Activated CD4-positive, alpha-beta memory T cell treated with anti-CD3 and anti-CD28 coated beads for 36 hours (primary cell): ENCODE measurements at regions of chr2 and their contacts with region 1.

Region 1: GRCh38 chr2:135985018-135985825 is at the start of gene DARS1:
- DNase-seq: peak; percentile 92
- H3K4me3 Mint-ChIP-seq: peak within 1 kb of the TSS; percentile 90
- H3K27ac Mint-ChIP-seq: peak within 1 kb of the TSS; percentile 97
- H3K4me1 Mint-ChIP-seq: peaks cover 48% of the 10 kb centered on the region
- H3K27me3 Mint-ChIP-seq: no peaks in the 10 kb centered on the region
- total RNA-seq, gene DARS1: 215 to 218 TPM

Region 2: DNA sequence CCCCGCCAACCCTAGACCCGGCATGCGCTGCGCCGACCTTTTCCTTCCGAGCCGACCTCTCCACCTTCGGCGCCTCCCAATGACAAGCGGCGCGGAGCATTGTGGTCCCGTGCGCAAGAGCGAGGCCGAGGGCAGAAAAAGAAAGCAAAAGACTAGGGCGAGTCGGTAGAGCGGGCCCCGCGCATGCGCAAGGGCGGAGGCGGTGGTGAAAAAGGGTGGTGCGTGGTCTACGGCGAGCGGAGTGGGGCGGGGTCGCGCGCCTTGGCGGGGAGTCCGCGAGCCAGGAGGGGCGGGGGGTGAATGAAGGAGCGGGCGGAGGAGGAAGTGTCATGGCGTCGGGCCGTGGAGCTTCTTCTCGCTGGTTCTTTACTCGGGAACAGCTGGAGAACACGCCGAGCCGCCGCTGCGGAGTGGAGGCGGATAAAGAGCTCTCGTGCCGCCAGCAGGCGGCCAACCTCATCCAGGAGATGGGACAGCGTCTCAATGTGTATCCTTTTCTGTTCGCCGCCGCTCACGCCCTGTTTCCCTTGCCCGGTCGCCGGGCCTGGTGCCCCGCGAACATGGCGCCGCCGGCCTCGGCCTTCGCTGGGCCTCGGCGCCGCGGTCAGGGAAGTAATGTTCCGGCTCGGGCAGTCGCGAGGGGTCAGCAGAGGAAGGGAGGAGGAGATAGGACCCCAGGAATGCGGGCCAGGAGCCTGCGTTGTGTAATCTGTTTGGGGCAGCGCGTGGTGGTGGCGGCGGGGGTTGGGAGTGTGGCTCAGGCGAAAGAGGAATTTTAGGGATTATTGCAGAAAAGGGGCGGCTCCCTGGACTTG is 1066.5 kb before region 1 on chr2 and contains the start of gene CCNT2:
- CTCF ChIA-PET with region 1: no interaction called
- POLR2A ChIA-PET with region 1: no interaction called
- intact Hi-C with region 1: loop called (anchors 10 kb)
- DNase-seq: peak; percentile 100
- H3K4me3 Mint-ChIP-seq: peak within 1 kb of the TSS; percentile 90
- H3K27ac Mint-ChIP-seq: peak within 1 kb of the TSS; percentile 97
- H3K4me1 Mint-ChIP-seq: peaks cover 35% of the 10 kb centered on the region
- H3K27me3 Mint-ChIP-seq: peaks cover 5% of the 10 kb centered on the region
- total RNA-seq, gene CCNT2: 25.1 to 25.7 TPM

Region 3: GRCh38 chr2:135876066-135876711 is 109.0 kb before region 1 on chr2 and contains the start of gene MCM6:
- CTCF ChIA-PET with region 1: no interaction called
- POLR2A ChIA-PET with region 1: interaction called, 9 read pairs
- intact Hi-C with region 1: loop called (anchors 1 kb)
- DNase-seq: peak; percentile 100
- H3K4me3 Mint-ChIP-seq: peak within 1 kb of the TSS; percentile 90
- H3K27ac Mint-ChIP-seq: peak within 1 kb of the TSS; percentile 98
- H3K4me1 Mint-ChIP-seq: peaks cover 39% of the 10 kb centered on the region
- H3K27me3 Mint-ChIP-seq: peaks cover 2% of the 10 kb centered on the region
- total RNA-seq, gene MCM6: 280 to 284 TPM

Region 4: DNA sequence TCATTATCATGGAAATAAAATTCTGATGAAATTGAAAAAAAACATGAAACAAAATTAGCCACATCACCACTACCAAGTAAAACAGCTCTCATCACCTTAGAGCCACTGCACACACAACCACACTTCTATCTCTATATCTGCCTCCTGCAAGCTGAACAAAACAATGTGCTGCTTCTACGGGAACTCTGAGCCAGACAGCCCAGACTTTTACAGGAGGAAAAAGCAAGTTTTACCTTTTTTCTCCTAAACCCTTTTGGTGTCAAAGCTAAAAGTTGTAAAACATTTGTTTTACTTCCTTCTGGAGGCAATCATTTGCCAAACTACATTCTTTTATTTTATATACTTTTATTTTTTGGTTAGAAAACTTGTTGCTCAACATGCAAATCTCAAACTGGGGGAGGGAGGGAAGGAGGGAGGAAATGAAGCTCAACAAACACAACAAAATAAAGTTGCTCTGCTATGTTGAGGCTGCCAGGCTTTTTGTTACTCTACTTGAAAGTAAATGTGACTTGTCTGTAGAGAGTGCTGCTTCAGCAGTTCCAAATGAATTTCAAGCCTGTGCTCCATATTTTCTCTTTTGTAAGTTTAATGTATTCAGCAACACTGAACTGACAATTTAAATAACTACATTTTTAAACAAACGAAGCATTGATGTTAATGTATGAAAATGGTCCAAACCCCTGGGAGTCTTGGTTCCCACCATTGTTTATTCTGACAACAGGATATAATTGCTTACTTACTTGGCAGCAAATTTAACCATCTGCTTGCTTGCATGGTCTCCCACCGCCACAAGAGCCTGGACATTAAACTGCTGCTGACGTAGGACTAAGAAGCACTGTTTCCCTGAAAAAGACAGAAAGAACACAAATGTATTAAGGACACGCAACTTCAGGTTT is 24.3 kb before region 1 on chr2:
- CTCF ChIA-PET with region 1: interaction called, 3 read pairs
- POLR2A ChIA-PET with region 1: interaction called, 6 read pairs
- intact Hi-C with region 1: loop called (anchors 1 kb)
- DNase-seq: peak; percentile 37
- H3K4me3 Mint-ChIP-seq: peak overlapping the region; percentile 1
- H3K27ac Mint-ChIP-seq: peak overlapping the region; percentile 75
- H3K4me1 Mint-ChIP-seq: peaks cover 59% of the 10 kb centered on the region
- H3K27me3 Mint-ChIP-seq: no peaks in the 10 kb centered on the region

Region 5: GRCh38 chr2:136052369-136053362 is 67.4 kb after region 1 on chr2:
- CTCF ChIA-PET with region 1: interaction called, 6 read pairs
- POLR2A ChIA-PET with region 1: interaction called, 44 read pairs
- intact Hi-C with region 1: loop called (anchors 1 kb)
- DNase-seq: peak; percentile 35
- H3K4me3 Mint-ChIP-seq: peak overlapping the region; percentile 57
- H3K27ac Mint-ChIP-seq: peak overlapping the region; percentile 99
- H3K4me1 Mint-ChIP-seq: peaks cover 86% of the 10 kb centered on the region
- H3K27me3 Mint-ChIP-seq: no peaks in the 10 kb centered on the region

Region 6: DNA sequence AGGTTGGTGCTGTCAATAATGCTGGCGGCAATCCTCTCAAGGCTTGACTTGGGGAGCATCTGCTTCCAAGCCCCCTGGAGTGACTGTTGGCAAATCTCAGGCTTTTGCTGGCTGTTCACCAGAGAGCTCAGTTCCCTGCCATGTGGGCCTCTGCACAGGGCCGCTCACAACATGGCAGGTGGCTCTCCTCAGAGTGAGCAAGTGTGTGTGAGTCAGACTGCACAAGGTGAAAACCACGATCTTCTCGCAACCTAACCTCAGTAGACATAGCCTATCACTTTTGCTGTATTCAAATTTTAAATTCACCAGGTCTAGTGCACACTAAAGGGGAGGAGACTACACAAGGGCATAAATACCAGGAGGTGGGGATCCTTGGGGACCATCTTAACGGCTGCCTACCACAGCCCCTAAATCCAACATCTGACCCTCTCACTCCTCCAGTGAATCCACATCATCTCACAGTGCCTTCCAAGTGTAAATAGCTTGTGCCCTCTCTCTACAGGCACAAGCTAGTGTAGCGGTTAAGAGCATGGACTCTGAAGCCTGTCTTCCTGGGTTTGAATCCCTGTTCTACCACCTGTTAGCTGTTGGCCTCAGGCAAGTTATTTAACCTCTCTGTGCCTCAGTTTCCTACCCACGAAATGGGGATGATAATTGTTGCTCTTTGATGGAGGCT is 320.4 kb after region 1 on chr2:
- CTCF ChIA-PET with region 1: no interaction called
- POLR2A ChIA-PET with region 1: no interaction called
- intact Hi-C with region 1: loop called (anchors 5 kb)
- DNase-seq: peak; percentile 84
- H3K4me3 Mint-ChIP-seq: peak overlapping the region; percentile 33
- H3K27ac Mint-ChIP-seq: peak overlapping the region; percentile 72
- H3K4me1 Mint-ChIP-seq: peaks cover 34% of the 10 kb centered on the region
- H3K27me3 Mint-ChIP-seq: peaks cover 3% of the 10 kb centered on the region

Region 7: GRCh38 chr2:136378712-136379595 is 393.7 kb after region 1 on chr2:
- CTCF ChIA-PET with region 1: interaction called, 10 read pairs
- POLR2A ChIA-PET with region 1: interaction called, 22 read pairs
- intact Hi-C with region 1: loop called (anchors 1 kb)
- DNase-seq: peak; percentile 88
- H3K4me3 Mint-ChIP-seq: no peak overlapping the region
- H3K27ac Mint-ChIP-seq: peak overlapping the region; percentile 44
- H3K4me1 Mint-ChIP-seq: peaks cover 87% of the 10 kb centered on the region
- H3K27me3 Mint-ChIP-seq: no peaks in the 10 kb centered on the region